Astrocyte of the cerebellum (primary cell): ENCODE measurements at regions of chr10 and their contacts with region 1.

Region 1: DNA sequence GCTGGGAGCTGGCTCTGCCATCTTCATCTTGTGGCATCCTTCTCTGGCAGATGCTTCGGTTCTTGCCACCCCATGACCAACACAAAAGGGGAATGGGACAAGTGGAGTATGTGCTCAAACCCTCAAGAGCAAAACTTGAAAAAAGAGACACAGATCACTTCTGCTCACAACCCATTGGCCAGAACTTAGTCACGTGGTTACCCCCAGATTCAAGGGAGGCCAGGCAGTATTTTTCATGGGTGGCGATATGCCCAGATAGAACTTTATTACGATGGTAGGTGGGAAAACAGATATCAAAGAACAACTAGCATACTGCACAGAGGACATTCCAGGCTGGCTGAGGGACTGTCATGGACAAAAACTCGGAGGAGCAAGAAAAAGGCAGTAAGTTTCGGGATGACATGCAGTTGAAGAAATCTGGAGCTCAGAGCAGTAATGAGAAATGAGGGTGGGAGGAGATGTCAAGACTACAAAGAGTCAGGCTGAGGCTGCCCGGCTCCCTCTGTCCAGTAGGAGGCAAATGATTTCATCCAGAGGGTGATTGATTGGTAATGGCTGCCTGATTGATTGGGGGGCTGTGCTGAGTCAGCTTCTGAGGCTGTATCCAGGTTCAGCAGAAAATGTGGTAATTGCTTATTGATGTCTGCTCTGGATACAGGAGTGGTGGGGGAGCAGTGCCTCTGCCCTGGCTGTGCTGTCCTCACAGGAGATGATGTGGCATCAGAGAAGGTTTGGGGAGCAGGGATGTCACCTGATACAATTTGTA is 25.3 kb downstream of the COL13A1 start:
- DNase-seq: no peak
- H3K4me3 ChIP-seq: no peak overlapping the region
- CTCF ChIP-seq: peak; percentile 21

Region 2: DNA sequence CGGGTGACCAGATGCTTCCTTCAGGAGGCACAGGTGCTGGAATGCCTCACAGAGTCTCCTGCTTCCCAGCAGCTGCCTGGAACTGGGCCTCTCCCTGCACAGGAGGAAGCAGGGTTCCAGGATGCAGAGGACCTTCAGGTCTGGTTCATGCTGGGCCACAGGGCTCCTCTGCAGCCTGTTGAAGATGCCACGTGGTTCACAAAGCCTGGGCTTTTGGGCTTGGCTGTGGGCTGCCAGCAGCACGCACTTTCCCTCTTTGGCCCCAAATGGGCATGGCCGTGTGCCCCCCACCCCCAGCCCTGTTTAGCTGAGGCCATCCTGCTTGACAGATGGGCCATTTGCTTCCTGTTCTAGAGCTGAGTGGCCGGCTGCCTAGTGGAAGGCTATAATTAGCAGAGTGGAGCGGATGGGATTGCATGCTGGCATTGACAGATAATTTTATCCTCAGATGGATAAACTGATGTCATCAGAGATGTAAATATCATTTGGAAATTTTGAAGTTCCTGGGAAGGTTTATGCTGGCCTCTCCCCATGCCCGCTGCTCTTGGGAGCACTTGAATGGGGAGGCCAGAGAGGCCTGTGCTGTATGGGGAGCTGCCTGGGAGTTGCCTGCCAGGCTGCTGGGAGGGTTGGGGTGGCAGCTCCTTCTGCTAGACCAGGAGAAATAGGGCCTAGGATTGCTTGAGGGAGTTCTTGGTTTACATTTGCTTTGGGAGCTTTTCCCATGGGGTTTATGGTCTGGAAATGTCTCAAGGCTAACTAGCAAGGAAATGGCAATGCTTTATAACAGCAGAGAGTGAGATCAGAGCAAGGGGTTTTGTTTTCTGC is 347.5 kb before region 1 on chr10:
- in situ Hi-C with region 1: no loop called
- DNase-seq: no peak
- H3K4me3 ChIP-seq: no peak overlapping the region
- CTCF ChIP-seq: no peak

Region 3: DNA sequence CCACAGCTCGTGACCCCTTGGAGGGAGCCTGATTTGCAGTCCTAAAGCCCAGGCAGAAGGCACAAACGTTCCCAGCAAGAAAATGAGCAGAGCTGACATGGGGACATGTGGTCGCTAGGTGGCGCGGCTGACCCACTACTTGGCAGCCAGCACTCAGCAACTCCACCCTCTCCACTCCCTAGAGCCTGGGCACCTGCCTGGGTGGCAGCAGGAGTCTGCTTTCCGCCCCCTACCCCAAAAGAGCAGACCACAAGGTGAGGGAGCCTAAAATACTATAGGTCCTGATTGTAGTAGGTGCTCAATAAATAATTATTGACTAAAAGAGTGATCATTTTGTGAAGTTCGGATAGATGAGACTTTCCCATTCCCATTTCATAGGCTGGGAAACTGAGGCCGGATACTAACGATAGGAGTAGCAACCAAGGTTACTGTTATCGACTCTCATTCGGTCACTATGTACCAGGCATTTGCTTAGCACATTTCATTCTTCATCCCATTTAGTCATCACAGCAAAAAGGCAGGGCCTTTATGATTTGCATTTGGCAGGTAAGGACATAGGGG is 311.2 kb before region 1 on chr10:
- in situ Hi-C with region 1: no loop called
- DNase-seq: peak; percentile 35
- H3K4me3 ChIP-seq: no peak overlapping the region
- CTCF ChIP-seq: peak; percentile 88

Region 4: DNA sequence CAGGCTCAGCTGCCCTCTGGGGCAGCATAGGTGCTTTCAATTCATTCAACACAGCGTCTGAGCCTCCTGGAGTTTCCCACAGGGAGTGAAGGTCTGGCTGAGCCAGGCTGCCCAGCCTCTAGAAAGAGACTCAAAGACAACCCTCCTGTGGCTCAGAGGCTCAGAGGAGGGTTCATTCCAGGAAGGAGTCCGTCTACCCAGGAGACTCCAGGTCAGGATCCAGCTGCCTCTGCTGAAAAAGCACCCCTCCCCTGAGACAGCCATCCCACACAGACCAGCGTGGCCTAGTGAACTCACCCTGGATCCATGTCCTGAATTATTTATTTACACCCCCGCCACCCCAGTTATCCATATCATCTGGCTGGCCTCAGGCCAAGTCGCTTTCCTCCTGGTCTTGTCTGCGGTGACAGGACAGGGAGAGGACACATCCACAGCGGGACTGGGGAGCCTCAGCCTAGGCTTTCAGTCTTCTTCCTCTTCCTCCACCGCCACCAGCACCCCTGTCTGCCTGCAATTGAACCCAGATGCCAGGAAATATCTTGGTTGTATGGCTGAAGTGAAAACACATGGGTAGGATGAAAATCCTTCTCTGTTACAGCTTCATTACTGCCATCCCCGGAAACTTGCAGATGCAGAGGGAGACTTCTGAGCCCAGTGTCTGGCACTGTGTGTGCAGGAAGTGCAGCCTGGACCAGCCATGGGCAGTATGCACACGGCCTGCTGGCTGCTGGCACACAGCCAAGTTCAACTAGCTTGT is 69.2 kb before region 1 on chr10:
- in situ Hi-C with region 1: no loop called
- DNase-seq: no peak
- H3K4me3 ChIP-seq: no peak overlapping the region
- CTCF ChIP-seq: no peak

Region 5: DNA sequence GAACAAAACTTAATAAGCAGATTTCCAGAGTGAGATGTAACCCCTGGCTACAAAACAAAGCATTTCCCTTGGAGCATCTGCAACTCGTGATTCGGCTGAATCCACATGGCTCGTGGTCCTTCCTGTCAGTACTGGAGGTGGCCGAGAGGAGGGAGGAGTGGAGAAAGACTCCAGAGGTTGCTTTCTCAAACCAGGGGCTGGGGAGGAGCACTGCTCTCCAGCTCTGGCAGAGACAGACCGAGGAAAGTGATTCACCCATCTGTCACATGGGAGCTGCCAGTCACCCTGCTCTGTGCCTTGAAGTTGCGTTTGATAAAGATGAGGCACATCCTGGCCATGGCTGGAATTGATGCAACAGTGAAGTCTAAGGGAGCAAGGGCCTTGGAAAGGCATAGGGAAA is 47.5 kb after region 1 on chr10:
- in situ Hi-C with region 1: loop called (anchors 5 kb)
- DNase-seq: no peak
- H3K4me3 ChIP-seq: no peak overlapping the region
- CTCF ChIP-seq: no peak